Activated naive CD4-positive, alpha-beta T cell treated with anti-CD3 and anti-CD28 coated beads for 36 hours (primary cell): ENCODE measurements at regions of chr16 and their contacts with region 1.

Region 1: DNA sequence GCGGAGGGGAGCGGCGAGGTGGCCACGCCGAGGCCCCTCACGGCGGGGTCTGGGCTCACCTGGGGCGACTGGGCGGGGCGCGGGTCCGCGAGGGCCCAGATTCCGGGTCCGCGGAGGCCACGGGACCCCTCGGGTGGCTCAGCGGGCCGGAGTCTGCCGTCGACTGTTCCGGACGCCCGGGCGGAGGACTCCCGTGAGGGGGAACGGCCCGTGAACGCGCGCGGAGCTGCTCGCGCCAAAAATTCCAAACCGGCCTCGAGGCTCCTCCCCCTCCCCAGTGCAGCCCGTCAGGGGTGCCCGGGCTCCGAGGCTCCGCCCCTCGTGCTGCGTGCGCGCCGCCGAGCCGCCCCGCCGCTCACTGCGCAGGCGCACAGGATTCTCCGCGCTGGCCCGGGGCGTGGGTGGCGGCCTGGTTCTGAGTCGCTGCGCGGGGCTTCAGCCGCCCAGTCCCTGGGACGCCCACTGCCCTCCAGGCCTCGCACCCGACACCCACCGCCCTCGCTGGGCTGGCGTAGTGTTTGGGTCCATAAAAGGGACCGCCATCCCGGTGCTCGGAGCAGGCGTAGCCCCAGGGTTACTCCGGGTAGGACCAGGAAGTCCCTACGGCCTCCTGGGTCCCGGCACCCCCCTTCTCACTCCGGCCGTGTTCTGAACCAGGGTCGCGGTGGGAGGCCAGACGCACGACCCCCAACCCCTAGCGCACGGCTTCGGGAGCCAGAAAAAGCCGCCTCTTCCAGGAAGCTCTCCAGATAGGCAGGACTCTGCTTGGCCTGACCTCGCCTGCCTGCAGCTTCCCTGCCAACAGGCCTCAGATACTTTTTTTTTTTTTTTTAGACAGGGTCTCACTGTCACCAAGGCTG is at the start of gene PKMYT1:
- DNase-seq: peak; percentile 95
- H3K4me3 Mint-ChIP-seq: peak within 1 kb of the TSS; percentile 81
- H3K27ac Mint-ChIP-seq: peak within 1 kb of the TSS; percentile 84
- H3K4me1 Mint-ChIP-seq: peaks cover 14% of the 10 kb centered on the region
- H3K27me3 Mint-ChIP-seq: no peaks in the 10 kb centered on the region
- total RNA-seq, gene PKMYT1: 128 to 136 TPM

Region 2: GRCh38 chr16:2926650-2927646 is 53.5 kb before region 1 on chr16:
- CTCF ChIA-PET with region 1: interaction called, 5 read pairs
- intact Hi-C with region 1: loop called (anchors 1 kb)
- DNase-seq: peak; percentile 95
- H3K4me3 Mint-ChIP-seq: no peak overlapping the region
- H3K27ac Mint-ChIP-seq: no peak overlapping the region
- H3K4me1 Mint-ChIP-seq: peaks cover 9% of the 10 kb centered on the region
- H3K27me3 Mint-ChIP-seq: no peaks in the 10 kb centered on the region

Region 3: DNA sequence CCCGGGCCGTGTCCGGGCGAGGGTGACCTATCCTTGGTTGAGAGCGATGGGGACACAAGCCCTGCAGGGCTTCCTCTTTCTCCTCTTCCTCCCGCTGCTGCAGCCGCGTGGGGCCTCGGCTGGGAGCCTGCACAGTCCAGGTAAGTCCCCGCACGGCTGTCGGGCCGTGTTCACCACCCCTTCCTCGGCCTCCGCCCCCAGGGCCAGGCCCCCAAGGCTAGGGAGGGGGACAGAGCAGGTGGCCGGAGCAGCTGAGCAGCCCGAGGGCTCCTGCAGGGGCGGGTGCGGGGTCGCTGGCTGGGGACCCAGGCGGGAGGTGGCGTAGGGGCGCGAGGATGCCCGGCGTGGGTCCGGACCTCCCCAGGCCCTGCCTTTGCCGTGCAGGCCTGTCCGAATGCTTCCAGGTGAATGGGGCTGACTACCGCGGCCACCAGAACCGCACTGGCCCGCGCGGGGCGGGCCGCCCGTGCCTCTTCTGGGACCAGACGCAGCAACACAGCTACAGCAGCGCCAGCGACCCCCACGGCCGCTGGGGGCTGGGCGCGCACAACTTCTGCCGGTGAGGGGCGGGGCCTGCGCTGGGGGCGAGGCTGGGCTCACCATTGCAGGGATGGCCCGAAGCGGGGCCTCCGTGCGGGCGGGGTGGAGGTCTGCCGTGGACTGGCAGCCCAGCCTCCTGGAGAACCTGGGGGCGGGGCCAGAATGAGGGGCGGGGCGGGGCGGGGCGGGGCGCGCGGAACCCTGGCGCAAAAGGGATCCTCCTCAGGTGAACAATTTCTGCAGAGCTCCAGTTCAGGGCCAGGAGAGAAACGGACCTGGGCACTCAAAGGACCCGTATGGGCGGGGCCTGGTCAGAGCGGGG is 15.8 kb before region 1 on chr16:
- CTCF ChIA-PET with region 1: interaction called, 12 read pairs
- intact Hi-C with region 1: loop called (anchors 2 kb)
- DNase-seq: peak; percentile 57
- H3K4me3 Mint-ChIP-seq: peak overlapping the region; percentile 32
- H3K27ac Mint-ChIP-seq: no peak overlapping the region
- H3K4me1 Mint-ChIP-seq: peaks cover 30% of the 10 kb centered on the region
- H3K27me3 Mint-ChIP-seq: peaks cover 40% of the 10 kb centered on the region

Region 4: GRCh38 chr16:2969545-2970521 is 10.6 kb before region 1 on chr16:
- CTCF ChIA-PET with region 1: interaction called, 9 read pairs
- intact Hi-C with region 1: loop called (anchors 1 kb)
- DNase-seq: peak; percentile 87
- H3K4me3 Mint-ChIP-seq: peak overlapping the region; percentile 74
- H3K27ac Mint-ChIP-seq: no peak overlapping the region
- H3K4me1 Mint-ChIP-seq: peaks cover 25% of the 10 kb centered on the region
- H3K27me3 Mint-ChIP-seq: peaks cover 28% of the 10 kb centered on the region